Spleen (tissue), 13 donors: ENCODE measurements at regions of chr7 and their contacts with region 1.

Region 1: DNA sequence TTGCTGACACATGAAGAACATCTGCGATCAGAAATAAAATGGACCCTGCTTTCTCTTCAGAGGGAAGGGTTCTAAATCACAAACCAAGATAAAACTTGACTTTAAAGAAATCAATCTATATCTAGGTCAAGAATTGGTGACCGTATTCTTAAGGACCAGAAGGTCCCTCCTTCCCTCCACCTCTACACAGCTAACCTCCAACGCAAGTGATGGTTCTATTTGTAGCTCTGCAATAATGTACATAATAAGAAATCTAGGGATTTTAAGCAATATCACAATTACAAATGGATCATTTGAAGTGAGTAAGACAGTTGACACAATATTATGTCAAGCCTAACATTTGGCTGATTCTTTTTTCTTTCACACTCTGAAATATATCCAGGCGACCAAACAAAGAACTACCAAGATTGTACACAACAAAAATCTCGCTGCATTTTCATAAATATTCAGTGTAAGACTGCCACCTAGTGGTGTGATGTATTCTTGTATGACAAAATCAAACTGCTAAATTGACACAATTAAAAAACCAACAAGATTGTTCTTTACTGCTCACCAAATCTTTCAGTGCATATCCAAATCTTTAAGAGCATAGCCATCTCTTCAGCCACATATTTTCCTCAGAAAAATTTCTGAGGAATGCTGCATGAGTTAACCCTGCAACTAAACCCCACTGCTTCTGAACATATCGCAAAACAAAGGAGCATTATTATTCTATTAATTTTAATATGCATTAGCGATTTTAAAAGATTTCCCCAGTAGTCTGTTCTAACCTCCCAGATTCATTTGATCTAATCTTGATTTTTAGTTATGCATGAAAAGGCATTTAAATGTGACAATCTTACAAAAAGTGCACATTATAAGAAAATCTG is 44.5 kb downstream of the ICA1 start:
- DNase-seq: no peak
- H3K4me3 ChIP-seq: no peak overlapping the region
- H3K27ac ChIP-seq: no peak overlapping the region
- H3K4me1 ChIP-seq: peaks cover 0 to 12% (median 2%) of the 10 kb centered on the region in 6 donors
- H3K27me3 ChIP-seq: no peaks in the 10 kb centered on the region
- CTCF ChIP-seq: peak; percentile 34 to 89 (median 74)
- POLR2A ChIP-seq: no peak

Region 2: DNA sequence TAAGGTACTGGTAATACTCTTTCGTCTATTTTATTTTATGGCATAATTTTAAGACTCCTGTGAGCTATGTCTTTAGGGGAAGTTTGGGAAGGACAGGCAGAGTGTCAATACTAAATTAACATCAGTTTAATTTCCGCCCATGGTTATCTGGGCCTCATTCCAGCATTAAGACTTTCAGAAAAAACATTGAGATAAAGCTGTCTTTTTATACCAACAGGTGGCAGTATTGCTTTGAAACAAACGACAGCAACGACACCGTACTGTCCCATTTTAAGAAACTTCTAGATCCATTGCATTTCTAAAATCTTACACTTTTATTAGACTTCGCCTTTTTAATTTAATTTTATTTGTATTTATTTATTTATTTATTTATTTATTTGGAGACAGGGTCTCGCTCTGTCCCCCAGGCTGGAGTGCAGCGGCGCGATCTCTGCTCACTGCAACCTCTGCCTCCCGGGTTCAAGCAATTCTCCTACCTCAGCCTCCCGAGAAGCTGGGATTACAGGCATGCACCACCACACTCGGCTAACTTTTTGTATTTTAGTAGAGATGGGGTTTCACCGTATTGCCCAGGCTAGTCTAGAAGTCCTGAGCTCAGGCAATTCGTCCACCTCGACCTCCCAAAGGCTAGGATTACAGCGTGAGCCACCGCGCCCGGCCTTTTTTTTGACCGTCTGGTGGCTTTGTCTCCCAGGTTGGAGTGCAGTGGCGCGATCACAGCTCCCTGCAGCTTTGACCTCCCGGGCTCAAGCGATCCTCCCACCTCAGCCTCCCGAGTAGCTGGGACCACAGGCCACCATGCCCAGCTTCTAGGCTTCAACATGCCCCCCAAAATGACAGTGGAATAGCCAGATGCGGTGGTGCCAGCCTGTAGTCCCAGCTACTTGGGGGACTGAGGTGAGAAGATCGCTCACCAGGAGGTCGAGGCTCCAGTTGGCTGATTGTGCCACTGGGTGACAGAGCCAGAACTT is 1113.8 kb before region 1 on chr7:
- intact Hi-C with region 1: loop called (anchors 10 kb)
- DNase-seq: peak; percentile 70
- H3K4me3 ChIP-seq: no peak overlapping the region
- H3K27ac ChIP-seq: no peak overlapping the region
- H3K4me1 ChIP-seq: peaks cover 0 to 27% (median 13%) of the 10 kb centered on the region in 6 donors
- H3K27me3 ChIP-seq: no peaks in the 10 kb centered on the region
- CTCF ChIP-seq: peak; percentile 35 to 76 (median 69)
- POLR2A ChIP-seq: no peak

Region 3: GRCh38 chr7:7577888-7578287 is 639.5 kb before region 1 on chr7:
- intact Hi-C with region 1: loop called (anchors 10 kb)
- DNase-seq: no peak
- H3K4me3 ChIP-seq: no peak overlapping the region
- H3K27ac ChIP-seq: no peak overlapping the region
- H3K4me1 ChIP-seq: peaks cover 7 to 38% (median 11%) of the 10 kb centered on the region in 6 donors
- H3K27me3 ChIP-seq: no peaks in the 10 kb centered on the region
- CTCF ChIP-seq: no peak
- POLR2A ChIP-seq: no peak

Region 4: GRCh38 chr7:7681179-7681935 is 536.1 kb before region 1 on chr7:
- intact Hi-C with region 1: loop called (anchors 10 kb)
- DNase-seq: no peak
- H3K4me3 ChIP-seq: no peak overlapping the region
- H3K27ac ChIP-seq: peak overlapping the region in 7 of 8 donors; percentile 52 to 73 (median 65)
- H3K4me1 ChIP-seq: peaks cover 9 to 31% (median 21%) of the 10 kb centered on the region in 6 donors
- H3K27me3 ChIP-seq: no peaks in the 10 kb centered on the region
- CTCF ChIP-seq: peak; percentile 16 to 70 (median 66)
- POLR2A ChIP-seq: no peak

Region 5: GRCh38 chr7:7761340-7761980 is 456.0 kb before region 1 on chr7:
- intact Hi-C with region 1: loop called (anchors 10 kb)
- DNase-seq: no peak
- H3K4me3 ChIP-seq: peak overlapping the region; percentile 29 to 63 (median 42)
- H3K27ac ChIP-seq: peak overlapping the region; percentile 37 to 87 (median 82)
- H3K4me1 ChIP-seq: peaks cover 6 to 52% (median 30%) of the 10 kb centered on the region in 6 donors
- H3K27me3 ChIP-seq: no peaks in the 10 kb centered on the region
- CTCF ChIP-seq: peak in 10 of 11 experiments; percentile 13 to 65 (median 48)
- POLR2A ChIP-seq: no peak